ENCODE measurements at regions of chr6 and their contacts with region 1.

Region 1: DNA sequence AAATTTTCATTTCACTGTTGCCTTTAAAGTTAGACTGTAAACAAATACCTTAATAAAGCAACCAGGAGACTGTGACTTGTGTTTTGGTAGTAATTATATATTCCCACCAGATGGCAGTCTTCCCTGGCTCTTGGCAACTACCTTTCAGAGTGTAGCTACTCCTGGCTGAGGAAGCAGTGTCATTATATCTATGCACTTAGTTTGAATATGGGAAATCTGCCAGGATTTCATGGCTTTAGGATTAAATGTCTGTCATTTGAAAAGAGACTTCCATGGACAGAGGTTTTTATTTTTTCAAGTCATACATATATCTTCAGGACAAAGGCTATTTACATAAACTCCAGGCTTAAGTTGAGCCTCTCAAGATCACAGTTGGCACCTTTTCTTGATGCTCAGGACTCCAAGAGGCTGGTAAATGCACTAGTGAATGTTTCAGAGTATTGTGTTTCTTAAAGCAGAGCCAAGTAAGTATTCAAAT is 160.1 kb downstream of the C6orf58 start:
- DNase-seq: peak; percentile 56
- H3K4me3 Mint-ChIP-seq: no peak overlapping the region
- H3K27ac Mint-ChIP-seq: peak overlapping the region; percentile 63
- H3K4me1 Mint-ChIP-seq: peaks cover 52% of the 10 kb centered on the region
- H3K27me3 Mint-ChIP-seq: no peaks in the 10 kb centered on the region

Region 2: DNA sequence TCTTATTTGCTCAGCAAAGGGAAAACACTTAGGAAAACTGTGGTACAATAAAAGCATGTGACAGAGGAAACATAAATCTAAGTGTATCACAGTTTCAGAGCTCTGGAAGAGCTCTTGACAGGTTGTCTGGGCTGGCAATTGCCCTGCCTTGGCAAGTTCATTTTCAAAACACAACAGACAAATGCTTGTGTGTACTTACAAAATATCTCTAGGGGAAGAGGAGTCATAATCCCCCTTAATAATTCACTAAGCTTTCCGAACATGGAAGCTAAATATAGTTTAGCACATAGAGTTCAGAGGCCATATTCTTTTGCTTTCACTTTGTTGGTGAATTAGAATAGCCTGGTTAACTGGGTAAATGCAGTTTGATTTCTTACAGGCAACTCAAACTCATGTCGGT is 375.4 kb after region 1 on chr6:
- CTCF ChIA-PET with region 1: no interaction called
- intact Hi-C with region 1: loop called (anchors 5 kb)
- DNase-seq: no peak
- H3K4me3 Mint-ChIP-seq: peak overlapping the region; percentile 44
- H3K27ac Mint-ChIP-seq: no peak overlapping the region
- H3K4me1 Mint-ChIP-seq: peaks cover 12% of the 10 kb centered on the region
- H3K27me3 Mint-ChIP-seq: no peaks in the 10 kb centered on the region

Region 3: GRCh38 chr6:128252341-128253176 is 515.5 kb after region 1 on chr6:
- CTCF ChIA-PET with region 1: no interaction called
- intact Hi-C with region 1: loop called (anchors 2 kb)
- DNase-seq: no peak
- H3K4me3 Mint-ChIP-seq: no peak overlapping the region
- H3K27ac Mint-ChIP-seq: no peak overlapping the region
- H3K4me1 Mint-ChIP-seq: peaks cover 15% of the 10 kb centered on the region
- H3K27me3 Mint-ChIP-seq: no peaks in the 10 kb centered on the region

Region 4: GRCh38 chr6:128327890-128328289 is 590.8 kb after region 1 on chr6:
- CTCF ChIA-PET with region 1: interaction called, 14 read pairs
- intact Hi-C with region 1: loop called (anchors 1 kb)
- DNase-seq: peak; percentile 30
- H3K4me3 Mint-ChIP-seq: no peak overlapping the region
- H3K27ac Mint-ChIP-seq: no peak overlapping the region
- H3K4me1 Mint-ChIP-seq: no peaks in the 10 kb centered on the region
- H3K27me3 Mint-ChIP-seq: no peaks in the 10 kb centered on the region

Region 5: DNA sequence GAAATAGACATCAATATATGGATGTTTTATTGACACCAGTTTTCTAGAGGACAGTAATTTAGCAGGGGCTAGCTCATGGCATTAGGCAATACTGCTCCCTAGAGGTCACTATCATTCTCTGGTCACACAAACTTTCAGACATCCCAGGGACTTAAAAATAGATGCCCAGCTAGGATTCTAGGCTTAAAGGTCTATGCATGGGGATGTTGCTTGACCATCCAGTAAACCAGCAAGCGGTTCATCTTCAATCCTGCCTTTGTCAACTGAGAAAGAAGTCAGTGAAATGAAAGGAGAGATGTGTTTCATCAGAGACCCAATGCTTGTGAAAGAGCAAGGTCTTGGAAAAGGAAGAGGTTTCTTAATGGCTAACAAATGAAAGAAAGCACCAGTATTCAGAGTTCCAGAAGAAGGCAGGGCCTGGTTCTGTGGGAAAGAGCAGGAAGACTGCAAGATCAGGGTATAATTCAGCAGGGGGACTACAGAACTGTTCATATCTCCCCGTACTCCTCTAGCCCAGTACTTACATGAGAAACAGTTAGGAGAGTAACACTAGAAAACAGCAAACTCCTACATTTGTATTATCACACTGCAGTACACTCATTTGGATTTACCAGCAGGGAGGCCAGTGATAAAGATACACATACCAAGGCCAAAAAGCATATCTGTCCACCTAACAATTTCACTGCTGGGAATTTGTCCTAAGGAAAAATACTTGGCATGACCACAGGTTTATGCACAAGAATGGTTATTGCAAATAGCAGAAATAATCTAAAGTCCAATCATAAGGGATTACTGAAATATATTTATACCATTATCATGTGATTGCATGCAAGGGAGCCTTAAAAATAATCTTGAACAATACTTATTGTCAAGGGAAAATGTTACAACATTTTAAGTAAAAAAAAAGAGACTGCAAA is 994.5 kb after region 1 on chr6:
- CTCF ChIA-PET with region 1: no interaction called
- intact Hi-C with region 1: loop called (anchors 1 kb)
- DNase-seq: peak; percentile 10
- H3K4me3 Mint-ChIP-seq: no peak overlapping the region
- H3K27ac Mint-ChIP-seq: no peak overlapping the region
- H3K4me1 Mint-ChIP-seq: no peaks in the 10 kb centered on the region
- H3K27me3 Mint-ChIP-seq: peaks cover 17% of the 10 kb centered on the region

Region 6: GRCh38 chr6:129575378-129576118 is 1838.5 kb after region 1 on chr6:
- CTCF ChIA-PET with region 1: no interaction called
- intact Hi-C with region 1: loop called (anchors 10 kb)
- DNase-seq: no peak
- H3K4me3 Mint-ChIP-seq: no peak overlapping the region
- H3K27ac Mint-ChIP-seq: no peak overlapping the region
- H3K4me1 Mint-ChIP-seq: peaks cover 7% of the 10 kb centered on the region
- H3K27me3 Mint-ChIP-seq: no peaks in the 10 kb centered on the region